Mammary epithelial cell (primary cell): ENCODE measurements at regions of chr16 and their contacts with region 1.

Region 1: GRCh38 chr16:17416461-17417311 is 54.1 kb downstream of the XYLT1 start:
- DNase-seq: no peak
- H3K4me3 ChIP-seq: no peak overlapping the region
- H3K27ac ChIP-seq: no peak overlapping the region
- H3K4me1 ChIP-seq: no peaks in the 10 kb centered on the region
- H3K27me3 ChIP-seq: no peaks in the 10 kb centered on the region
- CTCF ChIP-seq: no peak

Region 2: DNA sequence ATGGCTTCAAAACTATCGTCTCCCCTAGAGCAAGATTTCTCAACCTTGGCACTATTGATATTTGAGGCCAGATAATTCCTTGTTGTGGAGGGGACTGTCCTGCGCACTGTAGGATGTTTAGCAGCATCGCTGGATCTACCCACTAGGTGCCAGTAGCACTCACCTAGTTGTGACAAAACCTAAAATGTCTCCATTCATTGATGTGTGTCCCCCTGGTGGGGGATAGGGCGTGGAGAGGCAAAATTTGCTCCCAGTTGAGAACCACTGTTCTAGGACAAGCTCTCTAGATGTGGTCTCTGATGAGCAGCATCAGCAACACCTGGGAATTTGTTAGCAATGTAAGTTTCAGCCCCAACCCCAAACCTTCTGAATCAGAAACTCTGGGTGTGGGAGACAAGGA is 204.9 kb before region 1 on chr16:
- CTCF ChIA-PET with region 1: no interaction called
- dilution Hi-C with region 1: no loop called
- in situ Hi-C with region 1: no loop called
- intact Hi-C with region 1: no loop called
- DNase-seq: no peak
- H3K4me3 ChIP-seq: no peak overlapping the region
- H3K27ac ChIP-seq: no peak overlapping the region
- H3K4me1 ChIP-seq: no peaks in the 10 kb centered on the region
- H3K27me3 ChIP-seq: no peaks in the 10 kb centered on the region
- CTCF ChIP-seq: peak; percentile 33 to 44

Region 3: GRCh38 chr16:17301593-17302135 is 115.0 kb before region 1 on chr16:
- CTCF ChIA-PET with region 1: no interaction called
- dilution Hi-C with region 1: no loop called
- in situ Hi-C with region 1: loop called in 1 of 2 experiments (anchors 25 kb)
- intact Hi-C with region 1: no loop called
- DNase-seq: no peak
- H3K4me3 ChIP-seq: no peak overlapping the region
- H3K27ac ChIP-seq: no peak overlapping the region
- H3K4me1 ChIP-seq: peaks cover 14% of the 10 kb centered on the region
- H3K27me3 ChIP-seq: no peaks in the 10 kb centered on the region
- CTCF ChIP-seq: no peak

Region 4: DNA sequence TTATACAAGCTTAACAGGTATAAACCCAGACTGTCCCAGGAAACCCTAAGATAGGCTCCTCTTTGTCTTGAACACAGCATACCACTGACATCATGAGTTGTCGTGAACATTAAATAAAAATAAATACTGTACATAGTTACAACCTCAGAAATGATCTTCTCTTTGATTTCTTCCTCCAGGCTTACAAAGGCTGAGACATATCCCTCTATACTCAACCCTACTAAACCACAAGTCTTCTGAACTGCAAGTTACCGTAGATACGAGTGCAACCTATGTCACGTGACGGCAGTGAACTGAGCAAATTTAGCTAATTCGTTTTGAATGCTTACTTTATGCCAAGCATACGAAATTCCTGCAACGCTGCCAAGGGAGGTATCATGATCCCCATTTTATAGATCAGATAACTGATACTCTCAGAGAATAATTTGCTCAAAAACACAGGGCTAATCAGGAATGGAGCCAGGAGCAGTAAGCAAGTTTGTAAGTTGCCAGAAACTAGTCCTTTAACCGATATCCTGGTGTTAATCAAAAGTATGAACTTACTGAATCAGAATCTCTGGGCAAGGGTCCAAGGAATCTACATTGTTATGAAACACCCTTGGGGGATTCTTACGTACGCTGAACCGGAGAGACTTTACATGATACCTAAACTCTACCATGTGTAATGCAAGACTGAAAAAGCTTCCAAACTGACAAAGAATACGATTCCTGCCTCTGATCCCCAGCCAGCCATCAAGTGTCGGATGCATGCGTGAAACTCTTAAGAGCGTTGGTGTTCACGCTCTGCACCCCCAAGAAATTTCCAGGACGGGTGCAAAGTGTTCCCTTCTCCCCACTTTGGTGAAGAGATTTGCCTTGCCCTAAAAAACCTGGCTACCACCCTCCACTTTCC is 52.1 kb before region 1 on chr16:
- CTCF ChIA-PET with region 1: no interaction called
- dilution Hi-C with region 1: loop called (anchors 5 kb)
- in situ Hi-C with region 1: loop called in 1 of 2 experiments (anchors 10 kb)
- intact Hi-C with region 1: no loop called
- DNase-seq: peak; percentile 72
- H3K4me3 ChIP-seq: no peak overlapping the region
- H3K27ac ChIP-seq: peak overlapping the region; percentile 37
- H3K4me1 ChIP-seq: peaks cover 12% of the 10 kb centered on the region
- H3K27me3 ChIP-seq: no peaks in the 10 kb centered on the region
- CTCF ChIP-seq: no peak

Region 5: GRCh38 chr16:17459530-17460521 is 43.1 kb after region 1 on chr16:
- CTCF ChIA-PET with region 1: no interaction called
- dilution Hi-C with region 1: loop called (anchors 5 kb)
- in situ Hi-C with region 1: no loop called
- intact Hi-C with region 1: no loop called
- DNase-seq: no peak
- H3K4me3 ChIP-seq: no peak overlapping the region
- H3K27ac ChIP-seq: no peak overlapping the region
- H3K4me1 ChIP-seq: no peaks in the 10 kb centered on the region
- H3K27me3 ChIP-seq: no peaks in the 10 kb centered on the region
- CTCF ChIP-seq: no peak

Region 6: GRCh38 chr16:17591655-17592405 is 175.1 kb after region 1 on chr16:
- CTCF ChIA-PET with region 1: no interaction called
- dilution Hi-C with region 1: no loop called
- in situ Hi-C with region 1: no loop called
- intact Hi-C with region 1: no loop called
- DNase-seq: peak; percentile 25
- H3K4me3 ChIP-seq: no peak overlapping the region
- H3K27ac ChIP-seq: no peak overlapping the region
- H3K4me1 ChIP-seq: no peaks in the 10 kb centered on the region
- H3K27me3 ChIP-seq: no peaks in the 10 kb centered on the region
- CTCF ChIP-seq: no peak